Adrenal gland (tissue), 19 donors: ENCODE measurements at regions of chr15 and their contacts with region 1.

Region 1: DNA sequence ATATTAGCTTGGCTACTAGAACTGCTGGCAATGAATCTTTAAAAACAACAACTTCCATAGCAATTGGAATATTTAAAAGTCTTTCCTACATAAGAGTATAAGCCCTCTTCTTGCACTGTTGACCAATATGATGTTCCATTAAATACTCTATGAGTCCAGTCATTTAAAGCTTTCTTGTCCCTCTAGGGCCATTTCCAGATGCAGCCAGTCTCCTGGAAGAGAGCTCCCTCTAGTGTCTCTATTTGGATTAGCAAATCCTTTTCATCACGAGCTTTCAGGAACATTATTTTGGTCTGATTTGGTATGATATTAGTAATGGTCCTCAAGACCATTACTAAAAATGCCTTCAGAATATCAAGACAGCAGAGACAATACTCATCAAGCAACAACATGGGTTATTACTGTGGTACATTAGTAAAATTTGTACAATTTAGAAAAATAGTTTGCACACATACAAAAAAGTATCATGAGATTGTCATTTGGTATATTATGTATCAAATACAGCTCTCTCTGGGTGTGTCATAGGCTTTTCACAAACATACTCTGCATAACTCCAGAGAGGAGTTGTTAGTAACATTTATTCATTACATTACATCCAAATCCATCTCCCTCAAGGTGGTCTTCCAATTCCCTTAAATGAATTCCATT is 101.3 kb downstream of the DPH6 start:
- DNase-seq: peak in 1 of 7 donors; percentile 3
- H3K4me3 ChIP-seq: no peak overlapping the region
- H3K27ac ChIP-seq: no peak overlapping the region
- H3K4me1 ChIP-seq: no peaks in the 10 kb centered on the region
- H3K27me3 ChIP-seq: no peaks in the 10 kb centered on the region
- CTCF ChIP-seq: peak; percentile 56 to 87 (median 73)
- POLR2A ChIP-seq: no peak

Region 2: GRCh38 chr15:35078221-35078915 is 366.3 kb before region 1 on chr15:
- intact Hi-C with region 1: loop called (anchors 5 kb)
- DNase-seq: peak; percentile 28 to 66 (median 37)
- H3K4me3 ChIP-seq: no peak overlapping the region
- H3K27ac ChIP-seq: no peak overlapping the region
- H3K4me1 ChIP-seq: no peaks in the 10 kb centered on the region
- H3K27me3 ChIP-seq: no peaks in the 10 kb centered on the region
- CTCF ChIP-seq: peak; percentile 68 to 92 (median 82)
- POLR2A ChIP-seq: no peak

Region 3: GRCh38 chr15:35289024-35289617 is 155.6 kb before region 1 on chr15:
- intact Hi-C with region 1: loop called (anchors 5 to 10 kb)
- DNase-seq: peak in 5 of 7 donors; percentile 19 to 36 (median 26)
- H3K4me3 ChIP-seq: no peak overlapping the region
- H3K27ac ChIP-seq: no peak overlapping the region
- H3K4me1 ChIP-seq: peaks cover 0 to 13% of the 10 kb centered on the region in 2 donors
- H3K27me3 ChIP-seq: no peaks in the 10 kb centered on the region
- CTCF ChIP-seq: peak; percentile 47 to 78 (median 74)
- POLR2A ChIP-seq: no peak

Region 4: DNA sequence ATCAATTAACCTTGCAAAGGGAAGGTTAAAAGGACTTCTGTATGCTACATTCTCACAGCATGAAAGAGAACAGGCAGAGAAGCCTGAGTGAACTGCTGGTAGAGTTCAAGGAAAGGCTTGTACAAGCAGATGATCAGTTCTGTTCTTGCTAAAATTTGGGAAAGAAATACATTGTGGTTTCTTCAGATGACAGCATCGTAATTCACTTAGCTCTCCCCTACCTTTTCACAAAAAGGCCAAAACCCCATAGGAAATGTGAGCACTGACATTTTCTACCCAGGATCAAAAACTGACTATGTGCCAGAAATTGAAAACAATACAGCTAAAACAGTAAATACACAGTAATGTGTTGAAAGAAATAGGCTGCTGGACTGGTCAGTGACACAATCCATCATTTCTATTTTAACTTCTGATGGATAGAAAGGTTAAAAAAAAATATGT is 115.1 kb before region 1 on chr15:
- intact Hi-C with region 1: no loop called
- DNase-seq: no peak
- H3K4me3 ChIP-seq: no peak overlapping the region
- H3K27ac ChIP-seq: no peak overlapping the region
- H3K4me1 ChIP-seq: no peaks in the 10 kb centered on the region
- H3K27me3 ChIP-seq: no peaks in the 10 kb centered on the region
- CTCF ChIP-seq: no peak
- POLR2A ChIP-seq: no peak